ENCODE measurements at regions of chr10 and their contacts with region 1.

Region 1: GRCh38 chr10:102894466-102895213 is 23.5 kb upstream of the CNNM2 start:
- DNase-seq: no peak
- H3K4me3 ChIP-seq: no peak overlapping the region
- H3K27ac ChIP-seq: no peak overlapping the region
- H3K4me1 ChIP-seq: no peaks in the 10 kb centered on the region
- H3K27me3 ChIP-seq: no peaks in the 10 kb centered on the region
- CTCF ChIP-seq: no peak

Region 2: DNA sequence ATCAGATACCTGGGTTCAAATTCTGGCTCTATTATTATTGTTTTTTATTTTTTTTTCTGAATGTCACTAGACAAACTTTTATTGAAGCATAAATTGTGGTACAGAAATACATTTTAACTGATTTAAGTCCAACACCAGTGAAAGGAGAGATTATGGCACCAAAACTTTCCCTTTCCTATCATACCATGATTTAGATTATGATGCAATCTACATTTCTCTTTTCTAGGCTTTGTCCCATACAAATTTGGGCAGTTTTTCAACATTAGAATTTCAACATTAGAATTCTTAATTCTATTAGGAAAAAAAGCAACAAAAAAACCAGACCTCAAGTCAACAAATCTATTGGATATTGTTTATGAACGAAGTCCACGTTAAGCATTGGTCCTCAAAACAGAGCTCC is 14.4 kb before region 1 on chr10:
- intact Hi-C with region 1: loop called (anchors 1 kb)
- DNase-seq: no peak
- H3K4me3 ChIP-seq: no peak overlapping the region
- H3K27ac ChIP-seq: no peak overlapping the region
- H3K4me1 ChIP-seq: no peaks in the 10 kb centered on the region
- H3K27me3 ChIP-seq: no peaks in the 10 kb centered on the region
- CTCF ChIP-seq: no peak

Region 3: DNA sequence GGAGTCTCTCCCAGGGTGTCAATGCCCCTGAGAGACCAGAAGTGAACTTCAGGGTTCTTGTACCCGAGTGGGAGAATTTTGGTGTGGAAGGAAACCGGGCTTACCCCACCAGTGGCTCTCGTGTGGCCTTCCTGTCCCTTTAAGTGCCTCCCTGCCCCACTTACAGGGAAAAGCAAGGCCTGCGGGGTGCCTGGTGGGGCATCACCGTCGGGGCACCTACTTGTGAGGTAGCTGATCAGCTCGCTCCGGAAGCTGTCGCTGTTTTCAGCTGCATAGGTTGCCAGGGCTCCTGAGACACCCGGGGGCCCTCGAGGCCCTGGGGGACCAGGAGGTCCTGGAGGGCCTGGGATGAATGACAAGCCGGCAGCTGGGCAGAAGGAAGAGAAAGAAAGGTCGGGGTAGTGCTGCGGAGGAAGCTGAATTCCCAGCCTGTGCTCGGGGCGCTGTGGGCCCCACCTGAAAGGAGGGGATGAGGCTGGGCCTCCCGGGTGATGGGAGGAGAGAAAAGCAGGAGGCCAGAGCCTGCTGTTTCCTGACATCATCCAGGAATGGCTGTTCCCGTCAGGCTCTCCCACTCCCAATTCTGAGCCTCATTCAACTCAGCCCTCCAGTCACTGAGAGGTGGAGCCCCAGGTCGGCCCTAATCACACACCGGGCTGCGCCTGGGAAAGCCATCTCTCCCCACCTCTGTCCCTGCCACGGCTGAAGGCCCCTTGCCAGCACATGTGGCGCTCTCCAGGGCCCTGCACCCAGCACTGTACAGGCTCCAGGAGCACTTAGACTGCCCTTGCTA is 1140.0 kb after region 1 on chr10:
- intact Hi-C with region 1: no loop called
- DNase-seq: no peak
- H3K4me3 ChIP-seq: no peak overlapping the region
- H3K27ac ChIP-seq: no peak overlapping the region
- H3K4me1 ChIP-seq: no peaks in the 10 kb centered on the region
- H3K27me3 ChIP-seq: no peaks in the 10 kb centered on the region
- CTCF ChIP-seq: no peak